Natural killer cell (primary cell): ENCODE measurements at regions of chr19 and their contacts with region 1.

Region 1: GRCh38 chr19:16771618-16772017 is 52.0 kb downstream of the NWD1 start:
- DNase-seq: peak; percentile 65 to 89
- ATAC-seq: peak; percentile 82 to 94 (median 92)
- H3K4me3 ChIP-seq: no peak overlapping the region
- H3K4me3 Mint-ChIP-seq: no peak overlapping the region
- H3K27ac ChIP-seq: no peak overlapping the region
- H3K27ac Mint-ChIP-seq: no peak overlapping the region
- H3K4me1 ChIP-seq: no peaks in the 10 kb centered on the region
- H3K4me1 Mint-ChIP-seq: no peaks in the 10 kb centered on the region
- H3K27me3 ChIP-seq: no peaks in the 10 kb centered on the region
- H3K27me3 Mint-ChIP-seq: peaks cover 5 to 22% of the 10 kb centered on the region in 2 donors
- CTCF ChIP-seq: peak; percentile 87

Region 2: GRCh38 chr19:16899566-16900075 is 128.0 kb after region 1 on chr19:
- intact Hi-C with region 1: loop called (anchors 1 kb)
- DNase-seq: peak in 1 of 2 donors; percentile 45
- ATAC-seq: peak in 1 of 3 donors; percentile 22
- H3K4me3 ChIP-seq: no peak overlapping the region
- H3K4me3 Mint-ChIP-seq: peak overlapping the region; percentile 47
- H3K27ac ChIP-seq: no peak overlapping the region
- H3K27ac Mint-ChIP-seq: peak overlapping the region; percentile 43 to 66
- H3K4me1 ChIP-seq: peaks cover 41% of the 10 kb centered on the region
- H3K4me1 Mint-ChIP-seq: peaks cover 14 to 23% of the 10 kb centered on the region in 2 donors
- H3K27me3 ChIP-seq: peaks cover under 1% of the 10 kb centered on the region
- H3K27me3 Mint-ChIP-seq: no peaks in the 10 kb centered on the region
- CTCF ChIP-seq: peak; percentile 39

Region 3: GRCh38 chr19:16969127-16969526 is 197.5 kb after region 1 on chr19:
- intact Hi-C with region 1: loop called (anchors 2 kb)
- DNase-seq: no peak
- ATAC-seq: no peak
- H3K4me3 ChIP-seq: no peak overlapping the region
- H3K4me3 Mint-ChIP-seq: no peak overlapping the region
- H3K27ac ChIP-seq: no peak overlapping the region
- H3K27ac Mint-ChIP-seq: no peak overlapping the region
- H3K4me1 ChIP-seq: no peaks in the 10 kb centered on the region
- H3K4me1 Mint-ChIP-seq: no peaks in the 10 kb centered on the region
- H3K27me3 ChIP-seq: no peaks in the 10 kb centered on the region
- H3K27me3 Mint-ChIP-seq: peaks cover 11 to 16% of the 10 kb centered on the region in 2 donors
- CTCF ChIP-seq: no peak

Region 4: DNA sequence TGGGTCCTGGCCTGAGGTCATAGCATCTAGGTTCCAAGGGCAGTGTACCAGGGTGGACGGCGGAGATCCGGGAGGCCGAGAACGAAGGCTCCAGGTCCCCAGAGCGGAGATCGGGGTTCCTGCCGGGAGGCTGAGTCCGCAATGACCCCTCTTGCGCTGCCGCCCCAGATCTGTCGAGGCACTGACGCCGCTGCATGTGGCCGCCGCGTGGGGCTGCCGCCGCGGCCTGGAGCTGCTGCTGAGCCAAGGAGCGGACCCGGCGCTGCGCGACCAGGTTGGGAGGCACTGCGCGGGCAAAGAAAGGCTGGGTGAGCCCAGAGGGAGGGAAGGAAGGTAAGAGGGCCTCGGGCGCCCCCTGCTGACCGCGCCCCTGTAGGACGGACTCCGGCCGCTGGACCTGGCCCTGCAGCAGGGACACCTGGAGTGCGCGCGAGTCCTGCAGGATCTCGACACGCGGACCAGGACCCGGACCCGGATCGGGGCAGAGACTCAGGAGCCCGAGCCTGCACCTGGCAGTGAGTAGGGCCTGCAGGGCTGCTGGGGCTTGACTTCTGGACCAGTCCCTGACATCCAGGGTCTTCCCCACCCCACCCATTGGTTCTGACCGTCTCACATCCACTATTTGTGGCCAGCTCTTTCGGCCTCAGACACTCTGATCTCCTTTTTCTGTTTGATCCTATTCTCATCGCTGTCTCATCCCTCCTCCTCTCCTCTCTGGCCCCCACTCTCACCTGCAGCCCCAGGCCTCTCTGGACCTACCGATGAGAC is 511.1 kb after region 1 on chr19:
- intact Hi-C with region 1: loop called (anchors 1 kb)
- DNase-seq: peak; percentile 76 to 87
- ATAC-seq: peak; percentile 92 to 98 (median 96)
- H3K4me3 ChIP-seq: peak overlapping the region; percentile 31
- H3K4me3 Mint-ChIP-seq: peak overlapping the region; percentile 74
- H3K27ac ChIP-seq: no peak overlapping the region
- H3K27ac Mint-ChIP-seq: no peak overlapping the region
- H3K4me1 ChIP-seq: peaks cover 19% of the 10 kb centered on the region
- H3K4me1 Mint-ChIP-seq: peaks cover 0 to 14% of the 10 kb centered on the region in 2 donors
- H3K27me3 ChIP-seq: peaks cover 12% of the 10 kb centered on the region
- H3K27me3 Mint-ChIP-seq: peaks cover 0 to 22% of the 10 kb centered on the region in 2 donors
- CTCF ChIP-seq: peak; percentile 86

Region 5: DNA sequence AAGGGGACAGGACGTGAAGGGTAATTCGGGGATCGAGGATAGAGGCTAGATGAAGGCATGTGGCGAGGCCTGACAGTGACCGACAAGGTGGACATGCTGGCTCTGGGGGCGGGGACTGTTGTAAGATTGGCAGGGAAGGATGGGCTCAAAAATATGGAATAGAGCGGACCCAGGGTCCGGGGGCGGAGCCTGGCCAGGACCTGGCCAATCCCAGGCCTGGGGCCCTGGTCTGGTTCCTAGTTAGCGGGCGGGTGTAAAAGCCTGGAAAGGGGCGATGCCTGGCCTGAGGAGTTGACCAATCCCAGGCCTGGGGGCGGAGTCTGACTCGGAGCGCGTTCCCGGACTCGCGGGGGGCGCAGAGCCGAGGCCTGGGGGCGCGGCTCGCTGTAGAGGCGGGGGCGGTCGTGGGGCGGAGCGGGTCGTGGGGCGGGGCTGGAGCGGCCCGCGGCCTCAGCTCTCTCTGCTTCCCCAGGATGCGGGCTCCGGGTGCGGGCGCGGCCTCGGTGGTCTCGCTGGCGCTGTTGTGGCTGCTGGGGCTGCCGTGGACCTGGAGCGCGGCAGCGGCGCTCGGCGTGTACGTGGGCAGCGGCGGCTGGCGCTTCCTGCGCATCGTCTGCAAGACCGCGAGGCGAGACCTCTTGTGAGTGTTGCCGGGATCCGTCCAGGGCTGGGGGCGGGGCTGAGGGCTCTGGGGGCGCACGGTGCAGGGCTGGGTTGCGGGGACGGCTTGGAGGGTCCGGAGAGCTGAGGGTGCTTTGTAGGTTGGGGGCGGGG is 698.6 kb after region 1 on chr19 and contains the start of gene SLC27A1:
- intact Hi-C with region 1: loop called (anchors 5 kb)
- DNase-seq: peak; percentile 87 to 93
- ATAC-seq: peak; percentile 72 to 84 (median 77)
- H3K4me3 ChIP-seq: peak within 1 kb of the TSS; percentile 94
- H3K4me3 Mint-ChIP-seq: peak within 1 kb of the TSS; percentile 98
- H3K27ac ChIP-seq: peak within 1 kb of the TSS; percentile 84
- H3K27ac Mint-ChIP-seq: peak within 1 kb of the TSS; percentile 90 to 96
- H3K4me1 ChIP-seq: peaks cover 44% of the 10 kb centered on the region
- H3K4me1 Mint-ChIP-seq: peaks cover 32 to 54% of the 10 kb centered on the region in 2 donors
- H3K27me3 ChIP-seq: no peaks in the 10 kb centered on the region
- H3K27me3 Mint-ChIP-seq: no peaks in the 10 kb centered on the region
- CTCF ChIP-seq: no peak
- total RNA-seq, gene SLC27A1: 12.9 to 26.2 (median 16.3) TPM